Activated CD4-positive, alpha-beta memory T cell treated with anti-CD3 and anti-CD28 coated beads for 36 hours (primary cell): ENCODE measurements at regions of chr13 and their contacts with region 1.

Region 1: GRCh38 chr13:50222569-50223332 is 207.5 kb downstream of the KCNRG start:
- DNase-seq: peak; percentile 45
- H3K4me3 Mint-ChIP-seq: peak overlapping the region; percentile 57
- H3K27ac Mint-ChIP-seq: no peak overlapping the region
- H3K4me1 Mint-ChIP-seq: peaks cover 61% of the 10 kb centered on the region
- H3K27me3 Mint-ChIP-seq: peaks cover 47% of the 10 kb centered on the region

Region 2: DNA sequence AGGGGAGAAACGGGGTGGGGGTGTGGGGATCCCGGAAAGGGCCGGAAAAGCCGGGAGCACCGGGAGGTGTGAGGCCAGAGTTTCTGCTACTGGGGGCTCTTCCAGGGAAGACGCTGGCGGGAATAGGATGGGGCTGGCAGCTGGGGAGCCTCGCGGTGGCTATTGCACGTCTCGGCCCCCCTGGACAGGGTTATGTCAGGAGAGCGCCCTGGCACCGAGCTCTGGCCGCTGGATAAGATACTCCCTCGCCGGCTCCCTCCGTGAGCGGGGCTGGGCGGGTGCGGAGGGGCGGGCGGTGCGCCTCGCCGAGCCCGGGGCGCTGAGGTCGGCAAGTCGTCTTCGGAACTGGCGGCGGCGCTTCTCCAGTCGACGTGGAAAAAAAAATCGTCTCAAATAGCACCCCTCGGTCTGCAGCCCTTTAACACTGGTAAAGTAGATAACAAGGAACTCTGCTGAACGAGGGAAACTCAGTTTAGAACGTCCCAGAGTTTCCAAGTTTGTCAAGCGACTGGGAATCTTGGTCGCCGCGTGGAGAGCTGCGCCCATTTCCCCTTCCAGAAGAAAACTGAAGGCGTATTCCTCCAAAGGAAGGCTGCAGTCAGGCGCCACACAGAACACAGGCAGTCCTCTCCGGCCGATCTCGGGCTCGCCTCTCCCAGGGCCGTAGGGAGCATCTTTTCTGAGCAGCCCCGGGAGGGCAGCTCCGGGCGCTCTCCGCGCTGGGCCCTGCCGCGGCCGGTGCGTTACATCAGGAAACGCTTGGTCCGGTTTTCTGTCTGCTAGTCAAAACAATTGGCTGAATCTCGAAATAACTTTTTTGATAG is 92.4 kb before region 1 on chr13:
- CTCF ChIA-PET with region 1: interaction called, 5 read pairs
- POLR2A ChIA-PET with region 1: interaction called, 12 read pairs
- intact Hi-C with region 1: loop called (anchors 2 kb)
- DNase-seq: peak; percentile 42
- H3K4me3 Mint-ChIP-seq: peak overlapping the region; percentile 66
- H3K27ac Mint-ChIP-seq: peak overlapping the region; percentile 8
- H3K4me1 Mint-ChIP-seq: peaks cover 63% of the 10 kb centered on the region
- H3K27me3 Mint-ChIP-seq: peaks cover 64% of the 10 kb centered on the region

Region 3: GRCh38 chr13:50167224-50167947 is 55.4 kb before region 1 on chr13:
- CTCF ChIA-PET with region 1: no interaction called
- POLR2A ChIA-PET with region 1: interaction called, 6 read pairs
- intact Hi-C with region 1: loop called (anchors 1 kb)
- DNase-seq: no peak
- H3K4me3 Mint-ChIP-seq: no peak overlapping the region
- H3K27ac Mint-ChIP-seq: no peak overlapping the region
- H3K4me1 Mint-ChIP-seq: peaks cover 15% of the 10 kb centered on the region
- H3K27me3 Mint-ChIP-seq: peaks cover 13% of the 10 kb centered on the region

Region 4: DNA sequence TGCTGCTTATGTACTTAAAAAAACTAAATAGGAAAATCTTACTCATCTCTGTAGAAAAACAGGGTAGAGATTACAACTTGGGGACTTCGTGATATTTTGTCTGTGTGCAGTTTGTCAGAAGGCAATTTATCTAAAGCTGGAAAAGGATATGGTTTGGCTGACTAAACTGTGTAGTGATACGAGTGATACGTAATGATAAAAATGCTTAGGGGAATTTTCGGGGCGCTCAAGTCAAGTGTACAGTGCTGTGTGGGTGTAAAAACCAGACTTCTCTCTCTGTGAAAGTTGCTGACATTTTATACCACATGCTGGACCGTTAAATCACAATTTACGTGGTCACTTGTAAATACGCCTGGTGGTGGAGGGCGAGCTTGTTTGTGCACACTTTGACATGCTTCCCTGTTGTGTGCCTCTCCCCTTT is 14.2 kb after region 1 on chr13:
- CTCF ChIA-PET with region 1: interaction called, 14 read pairs
- POLR2A ChIA-PET with region 1: interaction called, 14 read pairs
- intact Hi-C with region 1: loop called (anchors 1 kb)
- DNase-seq: peak; percentile 55
- H3K4me3 Mint-ChIP-seq: peak overlapping the region; percentile 65
- H3K27ac Mint-ChIP-seq: peak overlapping the region; percentile 81
- H3K4me1 Mint-ChIP-seq: peaks cover 49% of the 10 kb centered on the region
- H3K27me3 Mint-ChIP-seq: peaks cover 23% of the 10 kb centered on the region

Region 5: GRCh38 chr13:50244713-50245574 is 22.2 kb after region 1 on chr13:
- CTCF ChIA-PET with region 1: interaction called, 4 read pairs
- POLR2A ChIA-PET with region 1: interaction called, 11 read pairs
- intact Hi-C with region 1: loop called (anchors 1 kb)
- DNase-seq: peak; percentile 85
- H3K4me3 Mint-ChIP-seq: no peak overlapping the region
- H3K27ac Mint-ChIP-seq: no peak overlapping the region
- H3K4me1 Mint-ChIP-seq: peaks cover 41% of the 10 kb centered on the region
- H3K27me3 Mint-ChIP-seq: peaks cover 29% of the 10 kb centered on the region

Region 6: GRCh38 chr13:50255639-50256038 is 32.9 kb after region 1 on chr13:
- CTCF ChIA-PET with region 1: no interaction called
- POLR2A ChIA-PET with region 1: no interaction called
- intact Hi-C with region 1: loop called (anchors 5 kb)
- DNase-seq: no peak
- H3K4me3 Mint-ChIP-seq: no peak overlapping the region
- H3K27ac Mint-ChIP-seq: no peak overlapping the region
- H3K4me1 Mint-ChIP-seq: peaks cover 38% of the 10 kb centered on the region
- H3K27me3 Mint-ChIP-seq: peaks cover 27% of the 10 kb centered on the region